Gastrocnemius medialis (tissue), 4 donors: ENCODE measurements at regions of chr7 and their contacts with region 1.

Region 1: DNA sequence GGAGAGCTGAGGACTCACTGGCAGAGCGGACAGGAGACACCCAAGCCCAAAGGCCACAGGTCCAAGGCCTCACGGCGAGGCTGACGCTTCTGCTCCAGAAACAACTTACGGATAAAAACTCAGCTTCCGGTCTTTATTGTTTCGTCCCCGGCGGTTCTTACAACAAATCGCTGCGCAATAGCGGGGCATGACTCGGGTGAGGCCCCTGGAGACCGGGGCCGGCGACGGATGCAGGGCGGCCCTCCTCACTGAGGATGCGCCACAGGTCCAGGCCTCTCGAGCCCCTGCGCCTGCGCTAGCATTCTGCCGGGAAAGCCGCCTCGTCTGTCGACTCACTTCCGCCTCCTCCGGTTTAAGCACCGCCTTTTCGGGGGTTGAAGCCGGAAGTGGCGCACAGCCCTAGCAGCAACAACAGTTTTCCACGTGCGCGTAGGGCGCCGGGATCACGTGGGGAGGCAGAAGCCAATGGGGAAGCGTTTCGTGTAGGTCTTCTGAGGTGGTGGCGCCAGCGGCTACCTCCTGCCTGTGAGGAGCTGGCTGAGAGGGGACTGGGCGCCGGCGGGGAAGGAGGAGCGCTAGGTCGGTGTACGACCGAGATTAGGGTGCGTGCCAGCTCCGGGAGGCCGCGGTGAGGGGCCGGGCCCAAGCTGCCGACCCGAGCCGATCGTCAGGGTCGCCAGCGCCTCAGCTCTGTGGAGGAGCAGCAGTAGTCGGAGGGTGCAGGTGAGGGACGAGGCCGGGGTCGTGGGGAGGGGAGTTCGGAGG is at the starts of genes DNAJB9 and THAP5:
- DNase-seq: peak; percentile 99
- ATAC-seq: peak; percentile 93 to 95
- H3K4me3 ChIP-seq: peak within 1 kb of the TSS; percentile 58 to 95 (median 84)
- H3K27ac ChIP-seq: peak within 1 kb of the TSS; percentile 86 to 99 (median 96)
- H3K4me1 ChIP-seq: peaks cover 38 to 58% of the 10 kb centered on the region in 2 donors
- H3K27me3 ChIP-seq: no peaks in the 10 kb centered on the region
- CTCF ChIP-seq: no peak
- POLR2A ChIP-seq: peak; percentile 98 to 99
- total RNA-seq, gene DNAJB9: 24.2 to 96.6 (median 67.8) TPM
- total RNA-seq, gene THAP5: 22.5 to 36.0 (median 25.6) TPM

Region 2: DNA sequence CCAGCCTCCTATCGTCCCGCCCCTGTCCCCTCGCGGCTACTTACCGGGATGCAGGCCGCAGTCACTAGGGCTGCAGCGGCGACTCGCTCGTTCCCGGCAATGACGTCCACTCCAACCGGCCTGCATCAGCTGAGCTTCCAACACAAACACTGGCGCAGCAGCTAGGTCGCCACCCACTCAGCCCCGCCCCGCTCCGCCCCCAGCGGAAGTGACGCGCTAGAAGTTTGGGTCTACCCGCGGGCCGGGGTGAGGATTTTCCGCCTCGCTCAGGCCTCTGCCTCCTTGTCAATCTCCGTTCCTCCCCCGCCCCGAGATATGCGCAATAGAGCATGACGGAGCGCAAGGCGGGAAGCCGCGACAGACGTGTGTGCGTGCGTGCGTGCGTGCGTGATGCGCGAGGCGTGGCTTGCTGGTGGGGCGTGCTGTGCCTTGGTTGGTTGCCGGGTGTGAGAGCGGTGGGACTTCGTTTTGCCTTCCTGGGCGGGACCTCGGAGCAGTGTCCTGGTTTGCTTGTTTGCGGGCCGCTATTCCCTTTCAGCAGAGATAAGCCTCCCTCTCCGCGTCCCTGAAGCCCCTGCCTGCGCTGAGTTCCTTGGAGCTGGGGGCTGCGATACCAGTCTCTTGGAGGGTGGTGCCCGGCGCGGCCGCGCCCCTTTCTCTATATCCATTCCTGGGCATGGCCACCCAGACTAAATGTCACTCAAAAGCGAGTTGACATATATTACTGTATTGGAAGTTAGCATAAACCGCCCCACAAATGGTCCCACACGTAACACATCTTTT is 43.4 kb before region 1 on chr7 and contains the start of gene PNPLA8:
- in situ Hi-C with region 1: loop called (anchors 5 kb)
- intact Hi-C with region 1: loop called (anchors 1 kb)
- DNase-seq: peak; percentile 99 to 100
- ATAC-seq: peak; percentile 84 to 87
- H3K4me3 ChIP-seq: peak within 1 kb of the TSS; percentile 75 to 94 (median 86)
- H3K27ac ChIP-seq: peak within 1 kb of the TSS; percentile 96 to 99 (median 98)
- H3K4me1 ChIP-seq: peaks cover 29 to 36% of the 10 kb centered on the region in 2 donors
- H3K27me3 ChIP-seq: no peaks in the 10 kb centered on the region
- CTCF ChIP-seq: peak in 1 of 5 experiments; percentile 18
- POLR2A ChIP-seq: peak; percentile 95
- total RNA-seq, gene PNPLA8: 49.7 to 86.3 (median 61.9) TPM

Region 3: DNA sequence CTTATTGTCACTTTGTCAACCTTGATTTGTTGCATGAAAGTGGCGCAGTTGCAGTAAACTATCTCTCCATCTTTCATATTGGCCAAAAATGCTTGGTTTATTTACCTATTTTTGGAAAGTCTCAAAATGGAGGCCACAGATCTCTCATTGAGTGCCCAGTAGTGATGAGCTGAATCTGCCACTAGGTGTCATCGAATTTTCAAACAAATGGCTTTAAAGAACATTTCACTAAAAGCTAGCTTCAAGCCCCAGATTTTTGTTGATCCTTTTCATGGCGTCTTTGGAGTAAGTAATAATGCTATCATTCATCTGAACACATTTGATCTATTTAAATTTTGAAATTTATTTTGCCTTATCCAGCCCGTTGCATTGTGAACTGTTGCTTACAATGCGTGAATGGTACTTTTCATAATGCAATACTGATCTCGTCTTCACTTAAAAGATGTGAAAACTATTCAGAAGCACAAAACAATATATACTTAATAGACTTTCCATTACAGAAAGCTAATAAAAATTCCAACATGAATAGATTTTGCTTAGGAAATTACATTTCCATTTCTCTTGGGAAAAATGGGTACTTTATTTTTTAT is 236.3 kb after region 1 on chr7:
- in situ Hi-C with region 1: no loop called
- intact Hi-C with region 1: no loop called
- DNase-seq: no peak
- ATAC-seq: no peak
- H3K4me3 ChIP-seq: no peak overlapping the region
- H3K27ac ChIP-seq: no peak overlapping the region
- H3K4me1 ChIP-seq: no peaks in the 10 kb centered on the region
- H3K27me3 ChIP-seq: no peaks in the 10 kb centered on the region
- CTCF ChIP-seq: no peak
- POLR2A ChIP-seq: no peak